AG04449 (cell line): ENCODE measurements at regions of chr5 and their contacts with region 1.

Region 1: GRCh38 chr5:33065131-33065530 is 354.0 kb downstream of the NPR3 start:
- DNase-seq: no peak
- H3K4me3 ChIP-seq: no peak overlapping the region
- CTCF ChIP-seq: no peak

Region 2: GRCh38 chr5:33032271-33033070 is 32.7 kb before region 1 on chr5:
- CTCF ChIA-PET with region 1: no interaction called
- POLR2A ChIA-PET with region 1: no interaction called
- DNase-seq: no peak
- H3K4me3 ChIP-seq: no peak overlapping the region
- CTCF ChIP-seq: no peak

Region 3: GRCh38 chr5:33049845-33050244 is 15.3 kb before region 1 on chr5:
- CTCF ChIA-PET with region 1: interaction called, 12 read pairs
- POLR2A ChIA-PET with region 1: no interaction called
- DNase-seq: peak; percentile 50
- H3K4me3 ChIP-seq: no peak overlapping the region
- CTCF ChIP-seq: no peak